ENCODE measurements at regions of chr11 and their contacts with region 1.

Region 1: GRCh38 chr11:125887373-125888324 is at the start of gene HYLS1:
- DNase-seq: peak; percentile 97
- ATAC-seq: peak; percentile 90
- H3K4me3 Mint-ChIP-seq: peak within 1 kb of the TSS; percentile 78
- H3K27ac Mint-ChIP-seq: peak within 1 kb of the TSS; percentile 87
- H3K4me1 Mint-ChIP-seq: peaks cover 41% of the 10 kb centered on the region
- H3K27me3 Mint-ChIP-seq: no peaks in the 10 kb centered on the region
- total RNA-seq, gene HYLS1: 7.2 to 9.3 TPM

Region 2: DNA sequence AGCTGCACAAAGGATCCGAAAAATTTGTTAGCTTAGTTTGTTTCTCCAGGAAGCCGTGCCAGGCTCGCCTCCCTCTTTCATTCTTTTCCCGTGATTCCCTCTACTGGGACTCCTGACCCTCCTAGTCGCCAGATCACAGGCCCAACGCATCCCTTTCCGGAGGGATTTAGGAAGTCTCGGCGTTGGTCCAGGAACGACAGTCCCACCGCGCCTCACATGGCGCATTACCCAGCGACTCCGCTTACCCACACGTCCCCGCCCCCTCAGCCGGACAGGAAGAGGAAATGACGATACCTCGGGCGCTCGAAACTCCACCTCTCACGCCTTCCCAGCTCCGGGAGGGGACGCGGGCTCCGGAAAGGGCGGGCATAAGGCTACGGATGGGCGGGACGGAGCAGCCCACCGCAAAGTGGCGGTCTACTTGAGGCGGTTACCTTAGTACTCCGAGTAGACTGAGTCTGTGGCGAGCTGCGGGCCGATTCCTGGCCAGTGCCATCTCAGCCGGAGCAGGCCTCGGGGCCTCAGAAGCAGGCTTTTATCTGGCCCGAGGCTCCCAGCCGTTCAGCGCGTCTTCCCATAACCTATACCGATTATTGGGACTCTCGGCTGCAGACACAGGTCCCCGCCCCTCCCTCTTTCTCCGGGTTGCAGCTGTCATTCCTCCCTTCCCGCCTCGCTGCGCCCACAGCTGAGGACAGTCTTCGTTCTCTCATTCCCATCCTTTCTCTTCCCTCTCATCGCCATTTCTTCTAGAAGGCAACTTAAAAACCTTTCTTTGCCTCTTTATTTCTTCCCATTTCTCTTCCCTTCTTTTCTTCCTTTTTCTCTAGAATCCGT is 933.7 kb before region 1 on chr11 and contains the start of gene CCDC15:
- CTCF ChIA-PET with region 1: no interaction called
- POLR2A ChIA-PET with region 1: no interaction called
- intact Hi-C with region 1: loop called (anchors 2 to 5 kb)
- DNase-seq: peak; percentile 97
- ATAC-seq: peak; percentile 98
- H3K4me3 Mint-ChIP-seq: no peak within 1 kb of the TSS
- H3K27ac Mint-ChIP-seq: no peak within 1 kb of the TSS
- H3K4me1 Mint-ChIP-seq: peaks cover 4% of the 10 kb centered on the region
- H3K27me3 Mint-ChIP-seq: no peaks in the 10 kb centered on the region
- total RNA-seq, gene CCDC15: 5.6 to 6.7 TPM

Region 3: GRCh38 chr11:125592305-125593112 is 295.1 kb before region 1 on chr11 and contains the start of gene STT3A:
- CTCF ChIA-PET with region 1: no interaction called
- POLR2A ChIA-PET with region 1: no interaction called
- intact Hi-C with region 1: loop called (anchors 1 kb)
- DNase-seq: peak; percentile 99
- ATAC-seq: peak; percentile 93
- H3K4me3 Mint-ChIP-seq: peak within 1 kb of the TSS; percentile 97
- H3K27ac Mint-ChIP-seq: peak within 1 kb of the TSS; percentile 95
- H3K4me1 Mint-ChIP-seq: peaks cover 48% of the 10 kb centered on the region
- H3K27me3 Mint-ChIP-seq: no peaks in the 10 kb centered on the region
- total RNA-seq, gene STT3A: 127 to 128 TPM

Region 4: GRCh38 chr11:125842321-125842948 is 45.2 kb before region 1 on chr11:
- CTCF ChIA-PET with region 1: no interaction called
- POLR2A ChIA-PET with region 1: no interaction called
- intact Hi-C with region 1: no loop called
- DNase-seq: no peak
- ATAC-seq: no peak
- H3K4me3 Mint-ChIP-seq: no peak overlapping the region
- H3K27ac Mint-ChIP-seq: no peak overlapping the region
- H3K4me1 Mint-ChIP-seq: no peaks in the 10 kb centered on the region
- H3K27me3 Mint-ChIP-seq: peaks cover 2% of the 10 kb centered on the region

Region 5: DNA sequence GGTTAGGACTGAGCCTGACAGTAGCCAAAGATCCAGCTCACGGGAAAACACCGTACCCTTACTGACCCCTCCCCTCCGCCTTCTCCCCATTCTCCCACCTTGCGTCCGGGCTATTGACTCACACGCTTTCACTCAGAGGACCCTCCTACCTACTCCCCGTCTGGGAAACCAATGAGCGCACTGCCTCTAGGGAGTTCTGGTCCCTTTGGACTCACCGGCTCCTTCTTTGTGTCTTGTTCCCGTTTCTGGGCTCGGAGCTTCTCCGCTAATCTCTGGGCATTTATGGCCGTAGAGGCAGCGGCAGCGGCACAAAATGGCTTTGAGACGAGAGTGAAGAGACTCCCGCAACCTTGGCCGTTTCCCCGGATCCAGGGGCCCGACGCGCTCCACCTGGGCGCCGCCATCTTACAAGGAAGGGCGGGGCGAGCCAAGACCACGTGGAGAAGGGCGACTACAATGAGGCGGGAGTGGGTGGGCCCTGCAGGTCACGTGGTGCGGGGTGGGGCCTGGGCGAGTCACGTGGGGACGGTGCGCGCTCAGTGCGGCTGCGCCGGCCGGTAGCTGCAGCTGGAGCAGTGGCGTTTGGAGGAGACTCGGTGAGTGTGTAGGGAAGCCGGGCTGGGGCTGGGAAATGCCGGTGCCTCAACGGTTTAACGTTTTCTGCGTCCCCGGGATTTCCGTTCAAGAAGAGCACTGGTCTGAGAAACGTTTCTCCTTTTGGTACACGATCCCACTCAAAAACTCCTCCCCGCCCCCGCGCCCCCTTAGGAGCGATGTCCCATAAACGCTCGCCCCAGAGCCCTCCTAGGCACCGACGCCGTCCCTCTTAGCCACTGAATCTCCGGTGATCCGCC is 323.8 kb after region 1 on chr11 and contains the starts of genes FAM118B and RPUSD4:
- CTCF ChIA-PET with region 1: no interaction called
- POLR2A ChIA-PET with region 1: interaction called, 3 read pairs
- intact Hi-C with region 1: loop called in 1 of 2 experiments (anchors 1 kb)
- DNase-seq: peak; percentile 99
- ATAC-seq: peak; percentile 94
- H3K4me3 Mint-ChIP-seq: peak within 1 kb of the TSS; percentile 98
- H3K27ac Mint-ChIP-seq: peak within 1 kb of the TSS; percentile 93
- H3K4me1 Mint-ChIP-seq: peaks cover 39% of the 10 kb centered on the region
- H3K27me3 Mint-ChIP-seq: no peaks in the 10 kb centered on the region
- total RNA-seq, gene FAM118B: 8.9 to 9.0 TPM
- total RNA-seq, gene RPUSD4: 31.0 to 33.9 TPM

Region 6: DNA sequence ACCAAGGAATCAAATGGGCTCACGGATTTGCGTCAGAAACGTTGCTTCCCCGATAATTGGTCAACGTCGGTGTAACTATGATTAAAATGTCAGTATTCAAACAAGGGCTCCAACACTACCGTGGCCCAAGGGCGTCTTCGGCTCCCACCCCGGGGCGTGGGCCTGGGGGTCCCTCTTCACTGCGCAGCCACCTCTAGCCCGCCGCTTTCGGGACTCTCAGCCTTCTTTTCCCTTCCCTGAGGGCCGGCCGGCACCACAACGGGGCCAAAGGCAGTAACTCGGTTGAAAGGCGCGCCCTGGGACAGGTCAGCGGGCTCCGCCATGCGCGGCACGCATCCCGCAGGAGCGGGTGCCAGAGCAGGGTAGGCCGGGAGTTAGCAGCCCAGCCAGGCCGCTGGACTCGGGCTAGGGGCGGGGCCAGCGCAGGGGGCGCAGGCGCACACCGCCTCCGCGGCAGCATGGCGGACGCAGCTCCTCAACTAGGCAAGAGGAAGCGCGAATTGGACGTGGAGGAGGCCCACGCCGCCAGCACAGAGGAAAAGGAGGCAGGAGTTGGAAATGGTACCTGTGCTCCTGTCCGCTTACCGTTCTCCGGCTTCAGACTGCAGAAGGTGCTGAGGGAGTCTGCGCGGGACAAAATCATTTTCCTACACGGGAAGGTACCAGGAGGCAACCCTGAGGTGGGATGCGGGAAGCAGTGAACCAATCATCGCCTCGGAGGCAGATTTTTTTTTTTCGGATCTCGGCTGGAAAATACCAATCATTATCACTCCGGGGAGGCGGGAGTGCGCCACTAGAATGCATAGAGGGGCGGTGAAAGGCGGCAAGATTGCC is 416.2 kb after region 1 on chr11 and contains the start of gene DCPS:
- CTCF ChIA-PET with region 1: no interaction called
- POLR2A ChIA-PET with region 1: no interaction called
- intact Hi-C with region 1: loop called in 1 of 2 experiments (anchors 1 kb)
- DNase-seq: peak; percentile 92
- ATAC-seq: peak; percentile 93
- H3K4me3 Mint-ChIP-seq: peak within 1 kb of the TSS; percentile 85
- H3K27ac Mint-ChIP-seq: peak within 1 kb of the TSS; percentile 98
- H3K4me1 Mint-ChIP-seq: peaks cover 32% of the 10 kb centered on the region
- H3K27me3 Mint-ChIP-seq: no peaks in the 10 kb centered on the region
- total RNA-seq, gene DCPS: 29.7 to 39.3 TPM

Measured in activated CD4-positive, alpha-beta T cell treated with anti-CD3 and anti-CD28 coated beads for 36 hours (primary cell).